ENCODE measurements at regions of chr11 and their contacts with region 1.

Region 1: DNA sequence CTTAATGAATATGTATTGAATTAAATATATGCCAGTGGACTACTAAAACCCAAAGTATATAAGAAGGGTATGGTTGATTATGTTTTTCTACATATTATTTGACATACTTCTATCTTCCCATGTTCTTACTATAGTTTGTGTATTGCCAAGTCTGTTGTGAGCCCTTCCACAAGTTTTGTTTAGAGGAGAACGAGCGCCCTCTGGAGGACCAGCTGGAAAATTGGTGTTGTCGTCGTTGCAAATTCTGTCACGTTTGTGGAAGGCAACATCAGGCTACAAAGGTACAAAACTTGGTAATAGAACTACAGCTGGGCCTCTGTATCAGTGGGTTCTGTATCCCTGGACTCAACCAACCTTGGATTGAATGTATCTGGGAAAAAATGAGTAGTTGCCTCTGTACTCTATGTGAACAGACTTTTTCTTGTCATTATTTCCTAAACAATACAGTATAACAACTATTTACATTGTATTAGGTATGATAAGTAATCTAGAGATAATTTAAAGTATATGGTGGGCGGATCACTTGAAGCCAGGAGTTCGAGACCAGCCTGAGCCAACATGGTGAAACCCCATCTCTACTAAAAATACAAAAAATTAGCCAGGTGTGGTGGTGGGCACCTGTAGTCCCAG is 38.7 kb upstream of the TTC36 start:
- DNase-seq: peak; percentile 59
- ATAC-seq: peak; percentile 81
- H3K4me3 ChIP-seq: no peak overlapping the region
- H3K27ac ChIP-seq: no peak overlapping the region
- H3K4me1 ChIP-seq: no peaks in the 10 kb centered on the region
- H3K27me3 ChIP-seq: no peaks in the 10 kb centered on the region
- CTCF ChIP-seq: peak; percentile 79 to 91 (median 83)
- POLR2A ChIP-seq: no peak
- RAD21 ChIP-seq: peak; percentile 91

Region 2: DNA sequence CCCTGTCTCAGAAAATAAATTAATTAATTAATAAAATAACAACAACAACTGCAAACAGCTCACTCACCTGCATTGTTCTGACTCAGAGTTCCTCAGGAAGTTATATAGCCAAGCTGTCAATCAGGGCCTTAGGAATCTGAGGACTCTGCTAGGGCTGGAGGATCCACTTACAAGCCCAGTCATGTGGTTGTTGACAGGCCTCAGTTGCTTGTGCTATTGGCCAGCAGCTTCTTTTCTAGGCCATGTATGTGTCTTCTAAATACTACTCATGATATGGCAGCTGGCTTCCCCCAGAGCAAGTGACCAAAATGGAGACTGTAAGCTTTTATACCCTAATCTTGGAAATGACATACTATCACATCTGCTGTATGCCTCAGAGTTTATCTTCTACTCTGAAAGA is 108.0 kb before region 1 on chr11:
- CTCF ChIA-PET with region 1: no interaction called
- POLR2A ChIA-PET with region 1: no interaction called
- RAD21 ChIA-PET with region 1: no interaction called
- intact Hi-C with region 1: loop called (anchors 5 kb)
- DNase-seq: no peak
- ATAC-seq: no peak
- H3K4me3 ChIP-seq: no peak overlapping the region
- H3K27ac ChIP-seq: no peak overlapping the region
- H3K4me1 ChIP-seq: no peaks in the 10 kb centered on the region
- H3K27me3 ChIP-seq: no peaks in the 10 kb centered on the region
- CTCF ChIP-seq: no peak
- POLR2A ChIP-seq: no peak
- RAD21 ChIP-seq: no peak

Measured in HCT116 (cell line).